HepG2 (cell line): ENCODE measurements at regions of chr6 and their contacts with region 1.

Region 1: GRCh38 chr6:82006027-82006738 is 241.4 kb downstream of the IBTK start:
- DNase-seq: peak; percentile 57
- ATAC-seq: peak; percentile 94
- H3K4me3 ChIP-seq: no peak overlapping the region
- H3K27ac ChIP-seq: no peak overlapping the region
- H3K4me1 ChIP-seq: 0 out of 2 replicates have a peak, but pooled peaks cover 4% of the 10 kb centered on the region
- H3K27me3 ChIP-seq: no peaks in the 10 kb centered on the region
- CTCF ChIP-seq: peak; percentile 84
- EP300 ChIP-seq: no peak
- POLR2A ChIP-seq: no peak
- RAD21 ChIP-seq: peak; percentile 78

Region 2: GRCh38 chr6:81253821-81254220 is 752.4 kb before region 1 on chr6:
- CTCF ChIA-PET with region 1: no interaction called
- POLR2A ChIA-PET with region 1: no interaction called
- in situ Hi-C with region 1: loop called (anchors 25 kb)
- intact Hi-C with region 1: loop called (anchors 10 kb)
- DNase-seq: no peak
- ATAC-seq: no peak
- H3K4me3 ChIP-seq: no peak overlapping the region
- H3K27ac ChIP-seq: no peak overlapping the region
- H3K4me1 ChIP-seq: no peaks in the 10 kb centered on the region
- H3K27me3 ChIP-seq: no peaks in the 10 kb centered on the region
- CTCF ChIP-seq: no peak
- EP300 ChIP-seq: no peak
- POLR2A ChIP-seq: no peak
- RAD21 ChIP-seq: no peak

Region 3: GRCh38 chr6:81589461-81590323 is 416.5 kb before region 1 on chr6:
- CTCF ChIA-PET with region 1: no interaction called
- POLR2A ChIA-PET with region 1: no interaction called
- in situ Hi-C with region 1: no loop called
- intact Hi-C with region 1: loop called (anchors 10 kb)
- DNase-seq: peak; percentile 3
- ATAC-seq: peak; percentile 80
- H3K4me3 ChIP-seq: no peak overlapping the region
- H3K27ac ChIP-seq: no peak overlapping the region
- H3K4me1 ChIP-seq: no peaks in the 10 kb centered on the region
- H3K27me3 ChIP-seq: no peaks in the 10 kb centered on the region
- CTCF ChIP-seq: peak; percentile 56
- EP300 ChIP-seq: no peak
- POLR2A ChIP-seq: no peak
- RAD21 ChIP-seq: no peak

Region 4: GRCh38 chr6:81734085-81734484 is 272.1 kb before region 1 on chr6:
- CTCF ChIA-PET with region 1: interaction called, 13 read pairs
- POLR2A ChIA-PET with region 1: no interaction called
- in situ Hi-C with region 1: no loop called
- intact Hi-C with region 1: no loop called
- DNase-seq: peak; percentile 49
- ATAC-seq: peak; percentile 71
- H3K4me3 ChIP-seq: no peak overlapping the region
- H3K27ac ChIP-seq: no peak overlapping the region
- H3K4me1 ChIP-seq: no peaks in the 10 kb centered on the region
- H3K27me3 ChIP-seq: no peaks in the 10 kb centered on the region
- CTCF ChIP-seq: peak; percentile 43
- EP300 ChIP-seq: no peak
- POLR2A ChIP-seq: no peak
- RAD21 ChIP-seq: no peak

Region 5: GRCh38 chr6:81859884-81860283 is 146.3 kb before region 1 on chr6:
- CTCF ChIA-PET with region 1: no interaction called
- POLR2A ChIA-PET with region 1: no interaction called
- in situ Hi-C with region 1: no loop called
- intact Hi-C with region 1: loop called (anchors 10 kb)
- DNase-seq: no peak
- ATAC-seq: no peak
- H3K4me3 ChIP-seq: no peak overlapping the region
- H3K27ac ChIP-seq: no peak overlapping the region
- H3K4me1 ChIP-seq: peaks cover 40% of the 10 kb centered on the region
- H3K27me3 ChIP-seq: no peaks in the 10 kb centered on the region
- CTCF ChIP-seq: no peak
- EP300 ChIP-seq: no peak
- POLR2A ChIP-seq: no peak
- RAD21 ChIP-seq: no peak

Region 6: DNA sequence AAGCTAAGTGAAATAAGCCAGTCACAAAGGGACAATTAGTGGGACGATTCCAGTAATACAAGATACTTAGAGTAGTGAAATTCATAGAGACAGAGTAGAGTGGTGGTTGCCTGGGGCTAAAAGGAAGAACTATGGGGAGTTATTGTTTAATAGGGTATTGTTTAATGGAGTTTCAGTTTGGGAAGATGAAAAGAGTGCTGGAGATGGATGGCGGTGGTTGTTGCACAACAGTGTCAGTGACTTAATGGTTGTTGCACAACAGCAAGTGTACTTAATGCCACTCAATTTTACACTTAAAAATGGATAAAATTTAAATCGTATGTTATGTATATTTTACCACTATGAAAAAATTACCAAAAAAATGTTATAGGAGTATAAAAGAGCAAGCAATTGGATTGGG is 44.0 kb before region 1 on chr6:
- CTCF ChIA-PET with region 1: no interaction called
- POLR2A ChIA-PET with region 1: no interaction called
- in situ Hi-C with region 1: no loop called
- intact Hi-C with region 1: no loop called
- DNase-seq: no peak
- ATAC-seq: no peak
- H3K4me3 ChIP-seq: no peak overlapping the region
- H3K27ac ChIP-seq: no peak overlapping the region
- H3K4me1 ChIP-seq: no peaks in the 10 kb centered on the region
- H3K27me3 ChIP-seq: no peaks in the 10 kb centered on the region
- CTCF ChIP-seq: no peak
- EP300 ChIP-seq: no peak
- POLR2A ChIP-seq: no peak
- RAD21 ChIP-seq: no peak